Left cardiac atrium (tissue), 4 donors: ENCODE measurements at regions of chr18 and their contacts with region 1.

Region 1: DNA sequence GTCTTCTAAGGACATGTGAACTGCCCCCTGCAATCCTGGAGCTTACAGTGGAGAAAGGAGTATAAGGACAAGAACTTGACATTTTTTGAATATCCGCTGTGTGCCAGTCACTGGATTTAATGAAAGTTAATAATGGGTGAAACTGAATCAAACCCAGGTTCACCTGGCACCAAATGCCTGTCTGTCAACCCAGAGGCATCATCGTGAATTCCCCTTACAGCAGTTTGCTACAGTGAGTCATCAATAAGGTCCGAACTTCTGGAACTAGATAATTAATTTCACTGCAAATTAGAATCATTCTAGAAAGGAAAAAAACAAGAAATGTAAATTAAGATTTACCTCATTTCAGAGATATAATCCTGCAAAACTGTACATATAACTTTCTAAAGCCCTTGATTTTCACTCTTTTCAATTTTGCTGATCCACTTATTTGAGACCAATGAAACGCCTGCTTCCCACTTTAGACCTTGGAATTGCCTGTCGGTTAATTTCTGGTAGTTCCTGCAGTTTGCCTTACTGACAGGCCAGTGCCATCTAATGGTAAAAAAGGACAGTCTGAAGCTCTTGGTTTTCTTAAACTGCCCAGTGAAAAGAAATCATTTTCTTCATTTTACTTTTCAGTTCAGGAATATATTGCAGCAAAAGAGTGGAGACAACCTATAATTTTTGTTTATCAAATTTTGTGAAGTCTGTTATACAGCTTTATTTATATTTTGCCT is 8.2 kb downstream of the DSG2 start:
- DNase-seq: no peak
- ATAC-seq: peak; percentile 32 to 61

Region 2: GRCh38 chr18:31241900-31242409 is 264.2 kb before region 1 on chr18:
- intact Hi-C with region 1: loop called in 1 of 2 experiments (anchors 10 kb)
- DNase-seq: no peak
- ATAC-seq: peak; percentile 20 to 80

Region 3: DNA sequence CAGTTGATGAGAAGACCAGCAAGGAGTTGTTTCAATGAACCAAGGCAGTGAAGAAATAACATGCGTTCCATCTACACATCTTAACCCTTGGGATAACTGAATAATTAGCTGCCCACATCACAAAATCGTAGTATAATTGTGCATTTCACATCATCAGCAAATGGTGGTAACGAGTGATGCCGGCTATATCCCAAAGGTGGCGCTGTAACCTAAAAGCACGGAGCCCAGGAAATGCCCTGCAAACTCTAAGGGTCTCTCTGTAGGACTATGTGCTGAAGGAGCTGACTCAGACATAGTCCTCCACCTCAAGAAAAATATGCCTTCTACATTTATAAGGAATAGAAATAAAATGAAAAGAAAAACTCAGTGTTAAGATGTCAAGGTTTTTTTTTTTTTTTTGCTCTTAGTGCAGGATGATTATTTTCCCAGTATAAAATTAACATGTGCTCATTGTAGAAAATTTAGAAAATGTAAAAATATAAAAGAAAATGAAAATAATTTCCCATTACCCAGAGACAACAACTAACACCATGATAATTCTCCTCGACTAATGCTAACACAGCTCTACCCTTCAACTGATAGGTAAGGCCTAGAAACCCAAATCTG is 81.7 kb before region 1 on chr18:
- intact Hi-C with region 1: loop called in 1 of 2 experiments (anchors 10 kb)
- DNase-seq: no peak
- ATAC-seq: no peak

Region 4: DNA sequence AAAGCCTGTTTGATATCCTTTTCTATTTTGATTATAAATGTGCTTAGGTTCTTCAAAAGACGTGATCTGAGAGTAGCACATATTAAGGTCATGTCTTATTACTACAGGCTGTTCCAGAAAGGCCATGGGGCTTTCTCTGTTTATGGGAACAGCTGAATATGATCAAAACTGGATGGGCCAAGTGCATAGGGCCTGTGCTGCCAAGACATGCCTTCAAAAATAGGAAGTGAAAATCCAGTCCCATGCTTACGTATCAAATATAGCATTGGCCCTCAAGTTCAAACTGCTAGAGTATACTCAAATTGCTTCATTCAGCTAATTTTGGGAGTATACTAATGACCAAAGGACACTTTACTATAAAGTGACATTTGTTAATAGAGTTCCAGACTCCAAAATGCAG is 230.4 kb after region 1 on chr18:
- intact Hi-C with region 1: no loop called
- DNase-seq: no peak
- ATAC-seq: peak in 1 of 2 donors; percentile 23

Region 5: DNA sequence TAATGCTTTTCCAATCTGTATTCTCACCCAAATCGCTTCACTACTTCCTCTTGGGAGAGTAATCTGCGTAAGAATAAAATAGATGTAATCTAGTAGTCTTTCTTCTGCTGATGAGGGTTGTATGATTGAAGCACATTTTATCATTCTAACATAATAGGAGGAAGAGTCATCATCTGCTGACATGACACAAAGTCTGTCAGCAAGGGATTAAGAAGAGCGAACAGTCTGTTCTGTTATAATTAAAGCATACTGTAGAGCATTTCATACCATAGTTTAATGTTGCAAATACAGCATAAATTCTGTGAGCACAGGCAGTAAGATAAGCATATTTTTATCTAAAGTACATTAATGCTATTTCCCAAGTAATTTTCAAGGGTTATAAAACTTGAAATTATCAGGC is 244.1 kb after region 1 on chr18:
- intact Hi-C with region 1: no loop called
- DNase-seq: no peak
- ATAC-seq: no peak

Region 6: GRCh38 chr18:32742579-32742978 is 1236.4 kb after region 1 on chr18:
- intact Hi-C with region 1: no loop called
- DNase-seq: no peak
- ATAC-seq: no peak